ENCODE measurements at regions of chr15 and their contacts with region 1.

Region 1: GRCh38 chr15:83973816-83974215 is 261.8 kb upstream of the GOLGA6L4 start:
- DNase-seq: no peak
- H3K4me3 Mint-ChIP-seq: no peak overlapping the region
- H3K27ac Mint-ChIP-seq: no peak overlapping the region
- H3K4me1 Mint-ChIP-seq: no peaks in the 10 kb centered on the region
- H3K27me3 Mint-ChIP-seq: no peaks in the 10 kb centered on the region

Region 2: DNA sequence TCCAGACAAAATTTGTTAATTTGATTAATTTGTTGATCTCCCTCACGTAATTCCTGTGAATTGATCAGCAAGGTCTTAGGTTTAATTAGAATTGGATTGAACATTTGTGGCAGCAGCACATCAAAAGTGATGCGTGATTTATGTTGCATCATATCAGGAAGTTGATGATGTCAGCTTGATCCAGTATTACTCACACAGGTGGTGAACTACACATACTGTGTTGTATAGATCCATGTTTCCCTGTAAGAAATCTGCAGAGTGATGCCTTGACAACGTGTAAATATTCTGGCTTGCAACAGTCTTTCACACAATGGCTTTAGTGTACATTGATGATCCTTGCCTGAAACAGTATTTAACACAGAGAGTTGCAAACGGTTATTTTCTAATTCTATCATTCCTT is 119.5 kb before region 1 on chr15:
- intact Hi-C with region 1: loop called (anchors 10 kb)
- DNase-seq: no peak
- H3K4me3 Mint-ChIP-seq: no peak overlapping the region
- H3K27ac Mint-ChIP-seq: no peak overlapping the region
- H3K4me1 Mint-ChIP-seq: no peaks in the 10 kb centered on the region
- H3K27me3 Mint-ChIP-seq: peaks cover 3% of the 10 kb centered on the region